CD4-positive, alpha-beta memory T cell (primary cell): ENCODE measurements at regions of chr12 and their contacts with region 1.

Region 1: DNA sequence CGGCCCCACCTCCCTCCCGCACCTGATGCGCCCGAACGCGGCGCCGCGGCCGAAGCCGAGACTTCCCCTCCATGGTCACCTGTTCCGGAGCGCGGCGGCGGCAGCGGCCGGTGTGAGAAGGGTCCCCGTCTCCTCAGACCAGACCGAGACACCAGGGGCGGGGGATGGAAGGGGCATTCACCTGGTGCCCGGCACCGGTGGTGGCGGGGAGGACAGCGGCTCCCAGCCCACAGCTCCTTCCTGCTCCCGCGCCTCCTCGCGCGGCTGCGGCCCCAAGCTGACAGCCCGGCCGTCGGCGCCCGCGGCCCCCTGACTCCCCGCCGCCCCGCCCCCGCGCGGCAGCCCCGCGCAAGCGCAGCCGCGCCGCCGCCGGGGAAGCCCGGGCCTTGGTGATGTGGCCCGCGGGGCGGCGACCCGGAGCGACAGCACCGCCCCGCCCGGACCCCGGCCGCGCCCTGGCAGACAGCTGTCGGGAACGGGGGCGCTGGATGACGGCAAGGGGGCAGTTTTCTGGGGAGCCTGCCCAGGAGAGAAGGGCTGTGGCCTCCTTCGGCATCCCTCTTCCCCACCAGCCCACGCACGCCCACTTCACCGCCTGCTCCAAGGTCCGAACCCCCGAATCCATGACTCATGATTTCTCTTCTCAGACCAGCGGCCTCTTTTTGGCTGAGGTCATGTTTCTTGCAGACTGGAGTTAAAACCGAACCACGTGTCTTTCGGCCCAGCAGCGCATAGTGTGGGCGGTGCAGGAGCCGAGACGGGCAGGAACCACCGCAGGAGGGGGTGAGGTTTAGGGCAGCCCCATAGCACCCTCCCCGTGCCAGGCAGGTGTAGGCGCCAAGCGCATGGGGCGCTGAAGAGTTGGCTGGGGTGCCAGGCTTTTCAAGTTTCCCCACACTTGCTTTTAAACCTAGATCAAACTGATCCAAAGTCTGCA is at the start of gene SLC41A2:
- DNase-seq: peak; percentile 77 to 92 (median 81)
- H3K4me3 ChIP-seq: peak within 1 kb of the TSS; percentile 81 to 87
- H3K4me3 Mint-ChIP-seq: peak within 1 kb of the TSS; percentile 94 to 98 (median 97)
- H3K27ac ChIP-seq: peak within 1 kb of the TSS; percentile 68
- H3K27ac Mint-ChIP-seq: peak within 1 kb of the TSS; percentile 90 to 99 (median 96)
- H3K4me1 ChIP-seq: peaks cover 17% of the 10 kb centered on the region
- H3K4me1 Mint-ChIP-seq: peaks cover 13 to 30% (median 21%) of the 10 kb centered on the region in 4 donors
- H3K27me3 ChIP-seq: no peaks in the 10 kb centered on the region
- H3K27me3 Mint-ChIP-seq: peaks cover 0 to 3% of the 10 kb centered on the region in 2 donors
- total RNA-seq, gene SLC41A2: 3.6 to 3.7 TPM

Region 2: GRCh38 chr12:104680066-104680465 is 278.2 kb before region 1 on chr12:
- CTCF ChIA-PET with region 1: no interaction called
- POLR2A ChIA-PET with region 1: no interaction called
- intact Hi-C with region 1: loop called (anchors 2 kb)
- DNase-seq: peak in 4 of 5 donors; percentile 36 to 51 (median 39)
- H3K4me3 ChIP-seq: no peak overlapping the region
- H3K4me3 Mint-ChIP-seq: peak overlapping the region in 3 of 8 donors; percentile 14 to 45 (median 17)
- H3K27ac ChIP-seq: no peak overlapping the region
- H3K27ac Mint-ChIP-seq: peak overlapping the region in 5 of 7 donors; percentile 2 to 86 (median 82)
- H3K4me1 ChIP-seq: peaks cover 53% of the 10 kb centered on the region
- H3K4me1 Mint-ChIP-seq: peaks cover 48 to 83% (median 65%) of the 10 kb centered on the region in 4 donors
- H3K27me3 ChIP-seq: no peaks in the 10 kb centered on the region
- H3K27me3 Mint-ChIP-seq: no peaks in the 10 kb centered on the region

Region 3: GRCh38 chr12:104877123-104877705 is 81.1 kb before region 1 on chr12:
- CTCF ChIA-PET with region 1: no interaction called
- POLR2A ChIA-PET with region 1: no interaction called
- intact Hi-C with region 1: no loop called
- DNase-seq: peak in 4 of 5 donors; percentile 27 to 31 (median 30)
- H3K4me3 ChIP-seq: no peak overlapping the region
- H3K4me3 Mint-ChIP-seq: no peak overlapping the region
- H3K27ac ChIP-seq: no peak overlapping the region
- H3K27ac Mint-ChIP-seq: no peak overlapping the region
- H3K4me1 ChIP-seq: no peaks in the 10 kb centered on the region
- H3K4me1 Mint-ChIP-seq: peaks cover 0 to 2% (median 0%) of the 10 kb centered on the region in 4 donors
- H3K27me3 ChIP-seq: no peaks in the 10 kb centered on the region
- H3K27me3 Mint-ChIP-seq: no peaks in the 10 kb centered on the region

Region 4: GRCh38 chr12:104986022-104986941 is 28.0 kb after region 1 on chr12 and contains the start of gene NOPCHAP1:
- CTCF ChIA-PET with region 1: interaction called, 6 read pairs
- POLR2A ChIA-PET with region 1: no interaction called
- intact Hi-C with region 1: loop called (anchors 1 kb)
- DNase-seq: peak; percentile 73 to 84 (median 79)
- H3K4me3 ChIP-seq: peak within 1 kb of the TSS; percentile 68 to 80
- H3K4me3 Mint-ChIP-seq: peak within 1 kb of the TSS; percentile 88 to 94 (median 92)
- H3K27ac ChIP-seq: peak within 1 kb of the TSS; percentile 64
- H3K27ac Mint-ChIP-seq: peak within 1 kb of the TSS; percentile 59 to 94 (median 86)
- H3K4me1 ChIP-seq: peaks cover 28% of the 10 kb centered on the region
- H3K4me1 Mint-ChIP-seq: peaks cover 21 to 43% (median 27%) of the 10 kb centered on the region in 4 donors
- H3K27me3 ChIP-seq: no peaks in the 10 kb centered on the region
- H3K27me3 Mint-ChIP-seq: no peaks in the 10 kb centered on the region
- total RNA-seq, gene NOPCHAP1: 15.7 to 16.2 TPM

Region 5: GRCh38 chr12:105036937-105037649 is 78.8 kb after region 1 on chr12:
- CTCF ChIA-PET with region 1: interaction called, 5 read pairs
- POLR2A ChIA-PET with region 1: interaction called, 4 read pairs
- intact Hi-C with region 1: loop called (anchors 5 kb)
- DNase-seq: peak in 4 of 5 donors; percentile 10 to 35 (median 25)
- H3K4me3 ChIP-seq: no peak overlapping the region
- H3K4me3 Mint-ChIP-seq: peak overlapping the region; percentile 43 to 89 (median 76)
- H3K27ac ChIP-seq: peak overlapping the region; percentile 43
- H3K27ac Mint-ChIP-seq: peak overlapping the region; percentile 65 to 98 (median 94)
- H3K4me1 ChIP-seq: peaks cover 23% of the 10 kb centered on the region
- H3K4me1 Mint-ChIP-seq: peaks cover 21 to 42% (median 28%) of the 10 kb centered on the region in 4 donors
- H3K27me3 ChIP-seq: no peaks in the 10 kb centered on the region
- H3K27me3 Mint-ChIP-seq: no peaks in the 10 kb centered on the region

Region 6: GRCh38 chr12:105235732-105236476 is 277.6 kb after region 1 on chr12 and contains the start of gene APPL2:
- CTCF ChIA-PET with region 1: no interaction called
- POLR2A ChIA-PET with region 1: no interaction called
- intact Hi-C with region 1: no loop called
- DNase-seq: peak; percentile 61 to 73 (median 69)
- H3K4me3 ChIP-seq: peak within 1 kb of the TSS; percentile 63 to 74
- H3K4me3 Mint-ChIP-seq: peak within 1 kb of the TSS; percentile 90 to 97 (median 94)
- H3K27ac ChIP-seq: peak within 1 kb of the TSS; percentile 56
- H3K27ac Mint-ChIP-seq: peak within 1 kb of the TSS; percentile 90 to 98 (median 92)
- H3K4me1 ChIP-seq: peaks cover 39% of the 10 kb centered on the region
- H3K4me1 Mint-ChIP-seq: peaks cover 32 to 45% (median 38%) of the 10 kb centered on the region in 4 donors
- H3K27me3 ChIP-seq: no peaks in the 10 kb centered on the region
- H3K27me3 Mint-ChIP-seq: no peaks in the 10 kb centered on the region
- total RNA-seq, gene APPL2: 56.0 to 61.0 TPM